ENCODE measurements at regions of chr17 and their contacts with region 1.

Region 1: DNA sequence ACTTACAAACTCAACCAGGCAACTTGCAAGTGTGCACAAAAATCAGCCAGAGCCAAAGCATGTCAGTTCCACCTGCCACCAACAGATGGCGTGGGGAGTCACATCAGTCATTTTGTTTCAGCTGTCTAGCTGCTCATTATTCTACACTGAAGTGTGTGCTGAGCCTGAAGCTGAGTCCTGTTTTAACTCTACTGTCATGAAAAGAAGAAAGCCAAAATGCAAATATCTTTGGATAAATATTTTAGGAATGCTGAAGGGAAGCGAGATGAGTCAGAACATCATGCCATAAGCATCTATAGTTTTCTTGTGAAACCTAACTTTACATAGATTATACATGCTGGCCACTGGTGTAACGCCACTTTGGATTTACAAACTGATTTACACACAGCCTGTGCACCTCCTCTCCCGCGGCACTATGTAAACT is 172.6 kb downstream of the CDK5R1 start:
- DNase-seq: peak; percentile 49 to 81
- ATAC-seq: peak; percentile 74 to 86 (median 85)
- H3K4me3 ChIP-seq: no peak overlapping the region
- H3K4me3 Mint-ChIP-seq: no peak overlapping the region
- H3K27ac ChIP-seq: no peak overlapping the region
- H3K27ac Mint-ChIP-seq: no peak overlapping the region
- H3K4me1 ChIP-seq: no peaks in the 10 kb centered on the region
- H3K4me1 Mint-ChIP-seq: no peaks in the 10 kb centered on the region
- H3K27me3 ChIP-seq: no peaks in the 10 kb centered on the region
- H3K27me3 Mint-ChIP-seq: no peaks in the 10 kb centered on the region
- CTCF ChIP-seq: peak; percentile 93

Region 2: DNA sequence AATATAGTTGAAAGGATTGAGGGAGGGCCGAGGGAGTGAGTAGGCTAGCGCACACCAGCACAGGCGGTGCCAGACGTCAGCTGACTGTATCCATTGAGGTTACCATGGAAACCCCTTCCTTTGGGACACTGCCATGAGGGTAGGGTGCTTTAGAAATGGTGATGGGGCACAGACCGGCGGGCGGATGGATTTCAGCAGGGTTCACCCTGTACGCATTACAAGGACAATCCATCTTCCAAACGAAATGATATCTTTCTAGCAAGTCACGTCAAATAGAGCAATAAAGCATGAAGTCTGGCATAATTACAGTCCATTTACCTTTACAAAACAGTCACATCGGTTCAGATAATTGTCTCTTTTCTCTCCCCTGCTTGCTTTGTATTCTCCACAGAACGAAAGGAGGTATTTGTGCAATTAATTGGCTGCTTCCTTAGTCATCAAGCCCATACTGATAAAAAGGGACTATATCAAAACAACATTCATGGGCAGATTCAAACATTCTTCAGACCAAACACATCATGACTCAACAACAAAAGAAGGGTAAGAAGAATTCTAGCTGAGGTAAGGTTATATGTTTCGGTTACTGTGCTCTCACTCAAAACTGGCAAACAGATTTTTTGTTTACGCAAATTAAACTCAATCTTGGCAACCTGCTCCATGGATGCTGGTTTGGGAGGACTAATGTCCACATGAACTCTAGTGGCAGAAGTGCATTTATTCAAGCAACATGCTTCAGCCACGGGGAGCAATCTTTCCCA is 32.0 kb before region 1 on chr17:
- intact Hi-C with region 1: no loop called
- DNase-seq: no peak
- ATAC-seq: no peak
- H3K4me3 ChIP-seq: no peak overlapping the region
- H3K4me3 Mint-ChIP-seq: no peak overlapping the region
- H3K27ac ChIP-seq: no peak overlapping the region
- H3K27ac Mint-ChIP-seq: no peak overlapping the region
- H3K4me1 ChIP-seq: no peaks in the 10 kb centered on the region
- H3K4me1 Mint-ChIP-seq: no peaks in the 10 kb centered on the region
- H3K27me3 ChIP-seq: no peaks in the 10 kb centered on the region
- H3K27me3 Mint-ChIP-seq: no peaks in the 10 kb centered on the region
- CTCF ChIP-seq: no peak

Region 3: DNA sequence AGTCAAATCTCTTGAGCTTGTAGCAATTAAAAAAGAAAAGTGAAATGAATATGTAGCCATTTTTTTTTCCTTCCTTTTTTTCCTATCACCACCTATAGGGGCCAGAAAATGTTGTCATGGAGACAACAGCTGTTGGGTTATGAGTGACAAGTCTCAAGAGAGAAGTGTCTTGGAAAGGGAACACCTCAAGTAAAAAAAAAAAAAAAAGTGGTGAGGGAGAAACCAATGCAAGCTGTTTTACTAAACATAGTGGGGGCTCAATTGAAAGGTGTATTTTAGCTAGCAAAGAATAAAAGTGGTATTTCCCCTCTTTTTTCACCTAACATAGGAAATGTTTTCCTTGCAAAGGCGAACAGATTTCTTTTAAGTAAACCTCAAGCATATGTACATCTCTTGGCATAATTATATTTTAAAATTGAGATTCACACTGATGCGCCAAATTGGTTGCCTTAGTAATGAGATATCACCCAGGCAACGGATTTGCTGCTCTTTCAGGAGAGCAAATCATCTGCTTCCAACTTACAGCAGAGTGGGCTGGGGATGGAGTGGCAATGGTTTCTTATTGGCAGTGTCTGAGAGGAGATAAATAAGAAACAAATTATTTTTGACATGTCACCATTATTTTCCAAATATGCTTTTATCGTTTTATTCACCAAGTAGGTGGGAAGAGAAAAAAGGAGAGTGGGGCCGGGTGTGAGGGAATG is 33.9 kb after region 1 on chr17:
- intact Hi-C with region 1: no loop called
- DNase-seq: no peak
- ATAC-seq: no peak
- H3K4me3 ChIP-seq: no peak overlapping the region
- H3K4me3 Mint-ChIP-seq: no peak overlapping the region
- H3K27ac ChIP-seq: no peak overlapping the region
- H3K27ac Mint-ChIP-seq: peak overlapping the region; percentile 61 to 78
- H3K4me1 ChIP-seq: peaks cover 3% of the 10 kb centered on the region
- H3K4me1 Mint-ChIP-seq: peaks cover 21 to 29% of the 10 kb centered on the region in 2 donors
- H3K27me3 ChIP-seq: no peaks in the 10 kb centered on the region
- H3K27me3 Mint-ChIP-seq: no peaks in the 10 kb centered on the region
- CTCF ChIP-seq: no peak

Region 4: DNA sequence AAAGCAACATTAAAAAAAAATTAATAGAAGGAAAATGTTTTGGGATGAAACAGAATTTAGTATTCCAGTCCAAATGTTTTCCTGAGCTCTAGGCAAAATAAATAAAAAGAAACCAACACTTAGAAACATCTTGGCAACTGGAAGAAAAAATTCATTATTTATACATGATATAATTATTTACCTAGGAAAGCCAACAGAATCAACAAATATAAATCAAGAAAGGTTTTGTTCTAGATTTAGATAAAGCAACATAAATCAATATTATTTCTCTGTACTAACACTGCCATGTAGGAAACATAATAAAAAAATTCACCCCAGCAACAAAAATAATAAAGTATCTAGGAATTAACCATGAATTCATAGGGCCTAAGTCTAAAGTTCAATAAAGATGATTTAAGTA is 50.1 kb after region 1 on chr17:
- intact Hi-C with region 1: no loop called
- DNase-seq: no peak
- ATAC-seq: no peak
- H3K4me3 ChIP-seq: no peak overlapping the region
- H3K4me3 Mint-ChIP-seq: no peak overlapping the region
- H3K27ac ChIP-seq: no peak overlapping the region
- H3K27ac Mint-ChIP-seq: no peak overlapping the region
- H3K4me1 ChIP-seq: no peaks in the 10 kb centered on the region
- H3K4me1 Mint-ChIP-seq: no peaks in the 10 kb centered on the region
- H3K27me3 ChIP-seq: no peaks in the 10 kb centered on the region
- H3K27me3 Mint-ChIP-seq: peaks cover 7 to 8% of the 10 kb centered on the region in 2 donors
- CTCF ChIP-seq: no peak

Region 5: DNA sequence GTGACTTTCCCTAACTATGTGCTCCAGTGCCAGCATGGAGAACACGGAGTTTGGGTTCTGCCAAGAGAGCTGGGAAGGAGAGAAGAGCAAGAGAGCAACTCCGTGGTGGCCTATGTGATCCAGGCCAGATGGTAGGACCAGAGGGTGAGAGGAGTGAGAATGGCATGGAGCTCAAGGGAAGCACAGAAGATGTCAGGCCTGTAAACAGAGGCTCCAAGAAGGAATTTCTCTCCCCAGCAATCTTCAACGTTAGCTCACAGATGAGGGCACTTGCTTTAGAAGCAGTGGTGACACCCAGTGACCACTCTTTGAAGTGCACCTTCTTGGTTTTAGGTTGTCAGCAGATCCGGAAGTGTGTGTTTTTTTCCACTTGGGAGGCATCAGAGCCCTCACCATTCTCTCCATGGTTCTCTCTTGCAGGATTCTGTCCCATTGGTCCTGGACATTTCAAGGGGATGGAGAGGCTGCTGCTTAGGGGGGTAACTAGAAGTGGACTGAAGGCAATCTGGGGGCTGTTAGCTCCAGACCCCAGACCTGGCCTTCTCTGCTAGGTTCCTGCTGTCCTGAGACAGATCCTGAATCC is 250.4 kb after region 1 on chr17:
- intact Hi-C with region 1: loop called (anchors 10 kb)
- DNase-seq: peak; percentile 42 to 68
- ATAC-seq: peak; percentile 70 to 99 (median 96)
- H3K4me3 ChIP-seq: no peak overlapping the region
- H3K4me3 Mint-ChIP-seq: no peak overlapping the region
- H3K27ac ChIP-seq: no peak overlapping the region
- H3K27ac Mint-ChIP-seq: no peak overlapping the region
- H3K4me1 ChIP-seq: no peaks in the 10 kb centered on the region
- H3K4me1 Mint-ChIP-seq: no peaks in the 10 kb centered on the region
- H3K27me3 ChIP-seq: no peaks in the 10 kb centered on the region
- H3K27me3 Mint-ChIP-seq: peaks cover 0 to 10% of the 10 kb centered on the region in 2 donors
- CTCF ChIP-seq: peak; percentile 76